CD4-positive, alpha-beta T cell (primary cell): ENCODE measurements at regions of chr15 and their contacts with region 1.

Region 1: GRCh38 chr15:31435261-31435911 is 108.8 kb downstream of the KLF13 start:
- DNase-seq: peak; percentile 61 to 93 (median 80)
- ATAC-seq: peak; percentile 75
- H3K4me3 ChIP-seq: peak overlapping the region; percentile 55
- H3K4me3 Mint-ChIP-seq: peak overlapping the region; percentile 84
- H3K27ac ChIP-seq: peak overlapping the region; percentile 88 to 92
- H3K27ac Mint-ChIP-seq: peak overlapping the region; percentile 98
- H3K4me1 ChIP-seq: peaks cover 78% of the 10 kb centered on the region
- H3K4me1 Mint-ChIP-seq: peaks cover 76% of the 10 kb centered on the region
- H3K27me3 ChIP-seq: no peaks in the 10 kb centered on the region
- H3K27me3 Mint-ChIP-seq: no peaks in the 10 kb centered on the region
- CTCF ChIP-seq: peak; percentile 45

Region 2: DNA sequence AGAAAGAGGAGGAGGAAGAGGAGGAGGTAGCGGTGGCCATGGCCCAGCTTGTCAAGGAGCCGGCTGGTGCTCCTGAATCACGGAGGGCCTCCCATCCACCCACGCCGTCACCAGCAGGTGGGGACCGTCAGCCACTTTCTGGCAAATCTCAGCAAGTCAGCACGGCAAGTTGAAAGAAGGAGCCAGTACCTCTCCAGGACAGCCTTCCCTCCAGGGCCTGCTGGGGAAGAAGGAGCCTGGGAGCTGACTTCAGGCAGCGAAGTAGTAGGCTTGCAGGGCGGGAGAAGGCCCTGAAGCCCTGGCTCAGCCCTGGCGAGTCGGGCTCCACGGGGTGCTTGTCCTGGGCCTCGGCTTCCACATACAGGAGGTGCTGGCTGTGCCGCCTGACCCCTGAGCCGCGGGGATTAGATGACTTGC is 234.6 kb before region 1 on chr15:
- CTCF ChIA-PET with region 1: interaction called, 3 read pairs
- POLR2A ChIA-PET with region 1: interaction called, 3 read pairs
- intact Hi-C with region 1: loop called in 1 of 2 experiments (anchors 5 kb)
- DNase-seq: peak; percentile 65 to 85 (median 73)
- ATAC-seq: peak; percentile 84
- H3K4me3 ChIP-seq: no peak overlapping the region
- H3K4me3 Mint-ChIP-seq: no peak overlapping the region
- H3K27ac ChIP-seq: no peak overlapping the region
- H3K27ac Mint-ChIP-seq: no peak overlapping the region
- H3K4me1 ChIP-seq: peaks cover 41% of the 10 kb centered on the region
- H3K4me1 Mint-ChIP-seq: peaks cover 22% of the 10 kb centered on the region
- H3K27me3 ChIP-seq: no peaks in the 10 kb centered on the region
- H3K27me3 Mint-ChIP-seq: no peaks in the 10 kb centered on the region
- CTCF ChIP-seq: peak; percentile 57

Region 3: GRCh38 chr15:31344823-31345605 is 90.4 kb before region 1 on chr15:
- CTCF ChIA-PET with region 1: interaction called, 5 read pairs
- POLR2A ChIA-PET with region 1: interaction called, 20 read pairs
- intact Hi-C with region 1: no loop called
- DNase-seq: peak in 3 of 14 experiments; percentile 46 to 50 (median 47)
- ATAC-seq: no peak
- H3K4me3 ChIP-seq: peak overlapping the region; percentile 47
- H3K4me3 Mint-ChIP-seq: peak overlapping the region; percentile 90
- H3K27ac ChIP-seq: peak overlapping the region; percentile 81 to 86
- H3K27ac Mint-ChIP-seq: peak overlapping the region; percentile 90
- H3K4me1 ChIP-seq: peaks cover 100% of the 10 kb centered on the region
- H3K4me1 Mint-ChIP-seq: peaks cover 100% of the 10 kb centered on the region
- H3K27me3 ChIP-seq: no peaks in the 10 kb centered on the region
- H3K27me3 Mint-ChIP-seq: no peaks in the 10 kb centered on the region
- CTCF ChIP-seq: no peak

Region 4: DNA sequence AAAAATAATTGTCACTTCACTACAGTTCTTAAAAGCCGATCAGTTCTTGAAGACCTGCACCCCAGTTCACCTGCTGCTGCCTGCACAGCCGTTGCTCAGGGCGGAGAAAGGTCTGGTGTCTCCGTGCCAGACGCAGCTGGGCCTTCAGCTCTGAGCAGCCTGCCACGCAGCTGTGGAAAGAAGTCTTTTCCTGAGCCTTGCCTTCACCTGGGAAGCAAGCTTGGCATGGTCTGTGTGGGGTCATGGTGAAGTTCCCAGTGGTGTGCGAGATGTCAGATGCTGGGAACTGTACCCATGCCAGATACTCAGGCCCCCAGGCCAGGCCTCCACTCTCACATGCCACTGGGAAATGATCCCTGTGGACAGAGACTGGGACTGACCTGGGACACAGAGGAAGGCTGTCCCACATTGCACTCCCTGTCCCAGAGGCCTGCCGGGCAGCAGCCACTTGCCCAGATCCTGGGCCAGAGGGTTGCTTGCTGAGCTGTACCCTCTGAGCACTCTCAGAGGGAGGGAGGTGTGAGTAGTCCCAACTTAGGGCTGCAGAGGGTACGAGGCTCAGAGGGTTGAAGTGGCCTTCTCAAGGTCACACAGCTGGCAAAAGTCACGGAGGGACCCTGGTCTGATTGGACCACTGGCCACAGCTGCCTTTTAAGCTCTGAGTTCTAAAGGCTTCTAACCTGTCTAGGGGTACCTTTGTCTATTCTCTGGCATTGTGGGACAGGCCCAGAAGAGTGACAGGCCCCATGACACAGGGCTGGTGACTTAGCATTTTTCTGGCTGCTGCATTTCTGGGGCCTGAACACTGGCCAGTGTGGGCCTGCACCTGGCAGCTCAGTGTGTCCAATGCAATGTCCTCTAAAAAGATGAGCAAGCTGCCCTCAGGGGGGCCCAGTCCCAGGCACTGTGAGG is 53.3 kb before region 1 on chr15:
- CTCF ChIA-PET with region 1: interaction called, 4 read pairs
- POLR2A ChIA-PET with region 1: interaction called, 19 read pairs
- intact Hi-C with region 1: no loop called
- DNase-seq: no peak
- ATAC-seq: no peak
- H3K4me3 ChIP-seq: no peak overlapping the region
- H3K4me3 Mint-ChIP-seq: no peak overlapping the region
- H3K27ac ChIP-seq: peak overlapping the region in 1 of 2 donors; percentile 17
- H3K27ac Mint-ChIP-seq: peak overlapping the region; percentile 84
- H3K4me1 ChIP-seq: peaks cover 48% of the 10 kb centered on the region
- H3K4me1 Mint-ChIP-seq: peaks cover 53% of the 10 kb centered on the region
- H3K27me3 ChIP-seq: no peaks in the 10 kb centered on the region
- H3K27me3 Mint-ChIP-seq: no peaks in the 10 kb centered on the region
- CTCF ChIP-seq: no peak

Region 5: DNA sequence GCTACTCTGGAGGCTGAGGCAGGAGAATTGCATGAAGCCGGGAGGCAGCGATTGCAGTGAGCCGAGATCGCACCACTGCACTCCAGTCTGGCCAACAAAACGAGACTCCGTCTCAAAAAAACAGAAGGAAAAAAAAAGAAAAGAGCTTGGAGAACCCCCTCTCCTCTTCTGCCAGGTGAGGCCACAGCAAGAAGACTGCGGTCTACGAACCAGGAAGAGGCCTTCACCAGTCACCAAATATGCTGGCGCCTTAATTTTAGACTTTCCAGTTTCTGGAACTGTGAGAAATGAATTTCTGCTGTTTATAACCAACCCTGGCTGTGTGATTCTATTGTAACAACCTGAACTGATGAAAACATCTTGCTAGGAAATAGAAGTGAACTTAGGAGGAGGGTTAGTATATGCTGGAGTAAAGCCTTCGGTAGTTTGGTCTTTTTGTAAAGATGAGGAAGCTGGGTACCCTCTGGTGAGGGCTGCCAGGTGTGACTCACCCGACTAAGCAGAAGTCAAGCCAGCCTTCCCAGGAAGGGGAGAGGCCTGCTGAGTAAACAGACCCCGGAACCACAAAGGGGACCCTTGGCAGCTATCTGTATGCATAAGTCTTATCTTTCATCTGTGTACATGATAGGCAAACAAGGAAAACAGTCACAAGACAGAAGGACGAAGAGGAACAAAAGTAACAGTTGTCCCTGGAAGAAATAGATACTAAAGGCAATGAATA is 30.0 kb before region 1 on chr15:
- CTCF ChIA-PET with region 1: no interaction called
- POLR2A ChIA-PET with region 1: interaction called, 11 read pairs
- intact Hi-C with region 1: no loop called
- DNase-seq: peak in 3 of 14 experiments; percentile 44 to 57 (median 55)
- ATAC-seq: peak; percentile 29
- H3K4me3 ChIP-seq: no peak overlapping the region
- H3K4me3 Mint-ChIP-seq: peak overlapping the region; percentile 58
- H3K27ac ChIP-seq: no peak overlapping the region
- H3K27ac Mint-ChIP-seq: peak overlapping the region; percentile 77
- H3K4me1 ChIP-seq: peaks cover 17% of the 10 kb centered on the region
- H3K4me1 Mint-ChIP-seq: peaks cover 23% of the 10 kb centered on the region
- H3K27me3 ChIP-seq: no peaks in the 10 kb centered on the region
- H3K27me3 Mint-ChIP-seq: no peaks in the 10 kb centered on the region
- CTCF ChIP-seq: no peak

Region 6: GRCh38 chr15:31472636-31473384 is 37.4 kb after region 1 on chr15:
- CTCF ChIA-PET with region 1: interaction called, 11 read pairs
- POLR2A ChIA-PET with region 1: interaction called, 105 read pairs
- intact Hi-C with region 1: loop called in 1 of 2 experiments (anchors 5 kb)
- DNase-seq: peak in 13 of 14 experiments; percentile 28 to 86 (median 43)
- ATAC-seq: peak; percentile 91
- H3K4me3 ChIP-seq: peak overlapping the region; percentile 46
- H3K4me3 Mint-ChIP-seq: peak overlapping the region; percentile 67
- H3K27ac ChIP-seq: peak overlapping the region; percentile 55 to 69
- H3K27ac Mint-ChIP-seq: peak overlapping the region; percentile 83
- H3K4me1 ChIP-seq: peaks cover 57% of the 10 kb centered on the region
- H3K4me1 Mint-ChIP-seq: peaks cover 45% of the 10 kb centered on the region
- H3K27me3 ChIP-seq: no peaks in the 10 kb centered on the region
- H3K27me3 Mint-ChIP-seq: no peaks in the 10 kb centered on the region
- CTCF ChIP-seq: no peak

Region 7: DNA sequence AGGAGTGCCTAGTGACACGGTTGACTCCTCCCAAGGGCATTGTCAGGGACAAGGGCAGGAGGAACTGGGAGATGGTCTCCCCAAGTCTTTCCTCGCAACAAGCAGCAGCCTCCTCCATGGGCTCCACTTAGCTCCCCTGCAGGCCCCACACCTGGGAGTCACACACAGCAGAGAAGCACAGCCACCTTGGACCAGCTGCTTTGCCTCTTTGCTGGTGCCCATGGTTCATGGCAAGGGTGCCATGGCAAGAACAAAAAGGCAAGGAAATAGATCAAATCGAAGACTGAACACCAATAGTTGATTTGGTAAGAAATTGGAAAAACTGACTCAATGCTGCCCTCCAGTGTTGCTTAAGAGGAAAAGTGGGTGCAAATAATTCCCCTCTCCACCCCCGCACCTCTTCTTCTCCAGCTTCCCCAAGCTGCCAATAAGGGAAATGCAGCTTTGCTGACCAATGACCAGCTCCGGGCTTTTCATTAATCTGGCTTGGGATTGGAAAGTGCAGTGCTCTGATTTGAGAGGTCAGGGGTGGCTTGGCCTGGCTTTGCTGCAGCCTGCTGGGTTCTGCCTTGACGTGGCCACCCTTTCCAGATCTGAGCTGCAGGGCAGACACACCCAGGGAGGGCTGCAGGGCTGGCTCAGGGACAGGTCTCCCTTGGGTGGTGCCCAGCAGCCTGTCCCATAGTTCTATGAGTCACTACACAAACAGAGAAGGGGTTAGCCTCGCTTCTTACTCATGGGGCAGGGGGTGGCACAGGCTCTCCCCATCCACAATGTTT is 53.2 kb after region 1 on chr15:
- CTCF ChIA-PET with region 1: interaction called, 19 read pairs
- POLR2A ChIA-PET with region 1: interaction called, 56 read pairs
- intact Hi-C with region 1: loop called in 1 of 2 experiments (anchors 2 kb)
- DNase-seq: peak in 9 of 14 experiments; percentile 16 to 89 (median 33)
- ATAC-seq: peak; percentile 64
- H3K4me3 ChIP-seq: no peak overlapping the region
- H3K4me3 Mint-ChIP-seq: peak overlapping the region; percentile 58
- H3K27ac ChIP-seq: no peak overlapping the region
- H3K27ac Mint-ChIP-seq: no peak overlapping the region
- H3K4me1 ChIP-seq: peaks cover 37% of the 10 kb centered on the region
- H3K4me1 Mint-ChIP-seq: peaks cover 29% of the 10 kb centered on the region
- H3K27me3 ChIP-seq: no peaks in the 10 kb centered on the region
- H3K27me3 Mint-ChIP-seq: no peaks in the 10 kb centered on the region
- CTCF ChIP-seq: peak; percentile 81

Region 8: GRCh38 chr15:32818758-32819447 is 1383.5 kb after region 1 on chr15:
- CTCF ChIA-PET with region 1: no interaction called
- POLR2A ChIA-PET with region 1: no interaction called
- intact Hi-C with region 1: no loop called
- DNase-seq: no peak
- ATAC-seq: no peak
- H3K4me3 ChIP-seq: no peak overlapping the region
- H3K4me3 Mint-ChIP-seq: no peak overlapping the region
- H3K27ac ChIP-seq: no peak overlapping the region
- H3K27ac Mint-ChIP-seq: no peak overlapping the region
- H3K4me1 ChIP-seq: no peaks in the 10 kb centered on the region
- H3K4me1 Mint-ChIP-seq: no peaks in the 10 kb centered on the region
- H3K27me3 ChIP-seq: no peaks in the 10 kb centered on the region
- H3K27me3 Mint-ChIP-seq: peaks cover 5% of the 10 kb centered on the region
- CTCF ChIP-seq: no peak